ENCODE measurements at regions of chr7 and their contacts with region 1.

Region 1: DNA sequence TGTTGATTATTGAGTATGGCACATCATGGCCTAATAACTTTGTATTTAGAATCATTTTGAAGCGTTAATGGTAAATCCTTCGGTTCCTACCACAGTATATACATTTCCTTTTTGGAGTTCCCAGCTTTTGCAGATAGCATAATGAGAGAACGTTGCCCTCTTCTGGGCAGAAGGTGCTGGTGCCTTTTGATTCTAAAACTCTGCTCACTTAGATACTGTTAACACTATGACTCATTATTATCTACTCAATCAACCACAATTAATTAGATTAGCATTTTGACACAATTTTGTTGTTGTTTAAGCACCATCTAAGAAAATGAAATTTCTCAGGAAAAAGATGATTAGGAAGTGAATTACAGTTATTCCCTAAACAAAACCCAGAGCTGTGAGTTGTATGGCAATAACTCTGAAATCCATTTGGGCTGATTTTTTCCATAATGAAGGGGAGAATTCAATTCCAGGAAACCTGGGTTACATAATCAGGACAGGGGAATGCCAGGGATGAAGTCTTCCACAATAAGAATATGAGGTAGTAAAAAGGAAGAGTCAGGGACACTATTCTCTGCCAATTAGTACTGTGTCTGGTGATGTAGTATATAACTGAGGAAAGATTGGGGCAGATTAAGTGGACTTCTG is 11.5 kb upstream of the DLD start:
- DNase-seq: no peak
- H3K4me3 Mint-ChIP-seq: no peak overlapping the region
- H3K27ac Mint-ChIP-seq: no peak overlapping the region
- H3K4me1 Mint-ChIP-seq: peaks cover 10% of the 10 kb centered on the region
- H3K27me3 Mint-ChIP-seq: peaks cover 8% of the 10 kb centered on the region

Region 2: DNA sequence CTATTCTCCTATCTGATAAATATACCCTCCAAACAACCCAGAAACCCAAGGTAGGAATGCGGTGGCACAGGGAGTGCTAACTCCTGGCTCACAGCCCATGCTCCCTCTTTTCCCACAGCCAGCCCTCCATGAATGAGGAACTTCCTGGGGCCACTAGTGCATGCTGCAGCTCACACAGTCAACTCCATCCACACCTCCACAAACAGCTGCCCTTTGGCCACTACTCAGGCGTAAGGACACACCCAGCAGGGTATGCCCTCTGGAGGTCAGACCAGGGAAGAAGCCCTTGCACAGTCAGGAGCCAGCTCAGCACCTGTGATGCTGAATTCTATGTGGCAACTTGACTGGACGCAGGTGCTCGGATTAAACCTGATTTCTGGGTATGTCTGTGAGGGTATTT is 1099.6 kb before region 1 on chr7:
- intact Hi-C with region 1: loop called (anchors 10 kb)
- DNase-seq: no peak
- H3K4me3 Mint-ChIP-seq: no peak overlapping the region
- H3K27ac Mint-ChIP-seq: no peak overlapping the region
- H3K4me1 Mint-ChIP-seq: peaks cover 16% of the 10 kb centered on the region
- H3K27me3 Mint-ChIP-seq: peaks cover 2% of the 10 kb centered on the region

Region 3: DNA sequence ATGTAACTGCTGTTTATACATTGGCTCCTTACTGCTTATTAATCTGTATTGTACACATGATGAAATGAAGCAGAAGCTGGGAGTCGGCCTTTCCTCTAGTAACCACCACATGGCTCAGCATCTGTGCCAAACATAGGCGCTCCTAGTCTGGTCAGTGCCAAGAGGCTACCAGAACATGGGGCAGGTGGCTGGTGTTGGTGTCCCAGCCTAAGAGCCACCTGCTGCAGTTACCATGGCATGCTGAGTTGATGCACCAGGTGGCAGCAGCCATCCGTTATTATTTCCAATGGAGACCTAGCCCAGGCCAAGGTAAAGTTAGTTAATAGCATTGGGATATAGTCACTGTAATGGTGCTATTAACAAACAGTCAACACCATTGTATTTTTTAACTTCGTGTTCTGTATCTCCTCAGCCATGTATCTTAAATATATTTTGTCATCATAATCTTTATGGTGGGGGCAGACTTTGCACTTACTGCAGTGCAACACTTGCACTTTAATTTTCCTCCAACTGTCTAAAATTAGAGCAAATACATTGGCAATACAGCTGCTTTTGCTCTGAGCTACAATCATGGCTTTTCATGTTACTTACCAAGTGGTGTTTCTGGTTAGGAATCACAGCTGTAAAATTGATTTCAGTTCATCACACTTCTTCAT is 677.6 kb before region 1 on chr7:
- intact Hi-C with region 1: loop called (anchors 2 kb)
- DNase-seq: no peak
- H3K4me3 Mint-ChIP-seq: no peak overlapping the region
- H3K27ac Mint-ChIP-seq: no peak overlapping the region
- H3K4me1 Mint-ChIP-seq: no peaks in the 10 kb centered on the region
- H3K27me3 Mint-ChIP-seq: no peaks in the 10 kb centered on the region

Region 4: GRCh38 chr7:107563775-107564552 is 315.6 kb before region 1 on chr7 and contains the starts of genes COG5 and DUS4L:
- intact Hi-C with region 1: loop called (anchors 5 kb)
- DNase-seq: peak; percentile 75
- H3K4me3 Mint-ChIP-seq: peak within 1 kb of the TSS; percentile 89
- H3K27ac Mint-ChIP-seq: peak within 1 kb of the TSS; percentile 93
- H3K4me1 Mint-ChIP-seq: peaks cover 62% of the 10 kb centered on the region
- H3K27me3 Mint-ChIP-seq: no peaks in the 10 kb centered on the region
- total RNA-seq, gene COG5: 36.5 and 39.1 TPM in 2 replicates
- total RNA-seq, gene DUS4L: 11.8 and 13.5 TPM in 2 replicates

Region 5: GRCh38 chr7:107725151-107725740 is 154.3 kb before region 1 on chr7:
- intact Hi-C with region 1: loop called (anchors 1 kb)
- DNase-seq: peak; percentile 25
- H3K4me3 Mint-ChIP-seq: no peak overlapping the region
- H3K27ac Mint-ChIP-seq: no peak overlapping the region
- H3K4me1 Mint-ChIP-seq: no peaks in the 10 kb centered on the region
- H3K27me3 Mint-ChIP-seq: peaks cover 16% of the 10 kb centered on the region

Region 6: DNA sequence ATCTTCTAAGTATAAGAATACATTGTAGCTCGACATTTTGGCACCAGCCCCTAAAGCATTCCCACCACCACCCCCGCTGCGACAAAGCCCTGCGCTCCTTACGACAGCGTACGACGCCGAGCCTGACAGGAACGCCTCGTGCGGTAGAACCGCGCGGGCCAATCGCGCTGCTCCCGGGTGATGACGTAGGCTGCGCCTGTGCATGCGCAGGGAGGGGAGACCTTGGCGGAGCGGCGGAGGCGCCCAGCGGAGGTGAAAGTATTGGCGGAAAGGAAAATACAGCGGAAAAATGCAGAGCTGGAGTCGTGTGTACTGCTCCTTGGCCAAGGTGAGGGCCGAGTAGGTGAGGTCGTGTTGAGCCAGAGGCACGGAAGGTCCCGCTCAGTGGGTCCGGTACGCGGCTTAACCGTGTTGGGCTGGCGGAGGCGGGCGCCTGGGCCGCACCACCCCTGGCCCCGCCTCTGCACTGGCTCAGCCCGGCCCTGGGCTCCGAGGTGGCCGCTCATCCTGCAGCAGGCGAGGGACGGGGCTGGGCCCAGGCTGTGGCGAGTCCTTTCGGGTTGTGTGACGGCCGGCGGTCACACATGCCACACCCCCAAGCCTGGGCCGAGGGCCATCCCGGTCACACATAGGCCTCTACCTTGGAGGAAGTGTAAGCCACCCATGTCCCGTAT is 11.6 kb after region 1 on chr7 and contains the start of gene DLD:
- intact Hi-C with region 1: loop called (anchors 1 kb)
- DNase-seq: peak; percentile 93
- H3K4me3 Mint-ChIP-seq: peak within 1 kb of the TSS; percentile 100
- H3K27ac Mint-ChIP-seq: peak within 1 kb of the TSS; percentile 100
- H3K4me1 Mint-ChIP-seq: peaks cover 49% of the 10 kb centered on the region
- H3K27me3 Mint-ChIP-seq: peaks cover 3% of the 10 kb centered on the region
- total RNA-seq, gene DLD: 98.6 and 114 TPM in 2 replicates

Region 7: GRCh38 chr7:107939573-107940489 is 60.3 kb after region 1 on chr7:
- intact Hi-C with region 1: no loop called
- DNase-seq: no peak
- H3K4me3 Mint-ChIP-seq: no peak overlapping the region
- H3K27ac Mint-ChIP-seq: no peak overlapping the region
- H3K4me1 Mint-ChIP-seq: no peaks in the 10 kb centered on the region
- H3K27me3 Mint-ChIP-seq: no peaks in the 10 kb centered on the region

Measured in activated T-helper 1 cell treated with anti-CD3 and anti-CD28 coated beads, Interleukin-12 subunit alpha, Interleukin-12 subunit beta, Interleukin-2, Interleukin-4 antibody, amounts not matched to agents 30 ng/mL and 10 ng/mL and 1 ng/mL, durations not matched to agents 14 hours and 24 hours and 36 hours (primary cell).